ENCODE measurements at regions of chr19 and their contacts with region 1.

Region 1: GRCh38 chr19:51607920-51608562 is 22.2 kb downstream of the SIGLEC5 start:
- DNase-seq: peak; percentile 98
- ATAC-seq: peak; percentile 95
- H3K4me3 Mint-ChIP-seq: no peak overlapping the region
- H3K27ac Mint-ChIP-seq: no peak overlapping the region
- H3K4me1 Mint-ChIP-seq: no peaks in the 10 kb centered on the region
- H3K27me3 Mint-ChIP-seq: peaks cover 64% of the 10 kb centered on the region
- CTCF ChIP-seq: peak; percentile 80

Region 2: GRCh38 chr19:51570962-51571575 is 37.0 kb before region 1 on chr19 and contains the start of gene ZNF175:
- CTCF ChIA-PET with region 1: no interaction called
- POLR2A ChIA-PET with region 1: no interaction called
- DNase-seq: peak; percentile 92
- ATAC-seq: peak; percentile 99
- H3K4me3 Mint-ChIP-seq: peak within 1 kb of the TSS; percentile 91
- H3K27ac Mint-ChIP-seq: peak within 1 kb of the TSS; percentile 71
- H3K4me1 Mint-ChIP-seq: peaks cover 7% of the 10 kb centered on the region
- H3K27me3 Mint-ChIP-seq: peaks cover 34% of the 10 kb centered on the region
- CTCF ChIP-seq: no peak
- total RNA-seq, gene ZNF175: 10.7 to 11.2 TPM (median 10.9 TPM) in 3 replicates

Region 3: GRCh38 chr19:51593969-51594773 is 13.9 kb before region 1 on chr19:
- CTCF ChIA-PET with region 1: interaction called, 10 read pairs
- POLR2A ChIA-PET with region 1: no interaction called
- DNase-seq: peak; percentile 99
- ATAC-seq: peak; percentile 99
- H3K4me3 Mint-ChIP-seq: peak overlapping the region; percentile 94
- H3K27ac Mint-ChIP-seq: peak overlapping the region; percentile 15; the same call in 1 of the 2 replicates
- H3K4me1 Mint-ChIP-seq: peaks cover 12% of the 10 kb centered on the region
- H3K27me3 Mint-ChIP-seq: peaks cover 25% of the 10 kb centered on the region
- CTCF ChIP-seq: no peak

Region 4: DNA sequence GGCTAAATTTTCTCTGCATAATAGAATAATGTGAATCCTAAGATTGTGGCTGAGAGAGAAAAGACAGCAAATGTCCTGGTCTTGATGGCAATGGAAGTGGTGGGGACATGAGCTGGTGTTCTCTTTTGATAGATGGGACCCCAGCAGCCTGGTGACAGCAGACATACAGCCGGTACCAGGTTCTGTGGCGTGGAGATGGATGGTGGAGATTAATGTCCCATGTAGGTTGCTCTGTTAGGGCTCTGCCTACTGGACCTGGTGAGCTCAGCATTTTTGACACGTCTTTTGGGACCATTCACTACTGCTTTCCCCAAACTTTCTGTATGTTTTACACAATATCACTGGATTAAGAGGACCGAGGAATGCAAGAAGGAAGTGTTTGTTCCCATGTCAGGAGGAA is 46.7 kb after region 1 on chr19:
- CTCF ChIA-PET with region 1: interaction called, 25 read pairs
- POLR2A ChIA-PET with region 1: no interaction called
- DNase-seq: peak; percentile 34
- ATAC-seq: peak; percentile 69
- H3K4me3 Mint-ChIP-seq: no peak overlapping the region
- H3K27ac Mint-ChIP-seq: no peak overlapping the region
- H3K4me1 Mint-ChIP-seq: peaks cover 6% of the 10 kb centered on the region
- H3K27me3 Mint-ChIP-seq: peaks cover 53% of the 10 kb centered on the region
- CTCF ChIP-seq: no peak

Region 5: GRCh38 chr19:51688672-51689571 is 80.9 kb after region 1 on chr19:
- CTCF ChIA-PET with region 1: no interaction called
- POLR2A ChIA-PET with region 1: no interaction called
- DNase-seq: peak; percentile 81
- ATAC-seq: peak; percentile 25
- H3K4me3 Mint-ChIP-seq: peak overlapping the region; percentile 86
- H3K27ac Mint-ChIP-seq: peak overlapping the region; percentile 73
- H3K4me1 Mint-ChIP-seq: peaks cover 40% of the 10 kb centered on the region
- H3K27me3 Mint-ChIP-seq: peaks cover 8% of the 10 kb centered on the region; the same call in 1 of the 2 replicates
- CTCF ChIP-seq: no peak

Measured in WTC11 (cell line).